PC-9 (cell line): ENCODE measurements at regions of chr17 and their contacts with region 1.

Region 1: DNA sequence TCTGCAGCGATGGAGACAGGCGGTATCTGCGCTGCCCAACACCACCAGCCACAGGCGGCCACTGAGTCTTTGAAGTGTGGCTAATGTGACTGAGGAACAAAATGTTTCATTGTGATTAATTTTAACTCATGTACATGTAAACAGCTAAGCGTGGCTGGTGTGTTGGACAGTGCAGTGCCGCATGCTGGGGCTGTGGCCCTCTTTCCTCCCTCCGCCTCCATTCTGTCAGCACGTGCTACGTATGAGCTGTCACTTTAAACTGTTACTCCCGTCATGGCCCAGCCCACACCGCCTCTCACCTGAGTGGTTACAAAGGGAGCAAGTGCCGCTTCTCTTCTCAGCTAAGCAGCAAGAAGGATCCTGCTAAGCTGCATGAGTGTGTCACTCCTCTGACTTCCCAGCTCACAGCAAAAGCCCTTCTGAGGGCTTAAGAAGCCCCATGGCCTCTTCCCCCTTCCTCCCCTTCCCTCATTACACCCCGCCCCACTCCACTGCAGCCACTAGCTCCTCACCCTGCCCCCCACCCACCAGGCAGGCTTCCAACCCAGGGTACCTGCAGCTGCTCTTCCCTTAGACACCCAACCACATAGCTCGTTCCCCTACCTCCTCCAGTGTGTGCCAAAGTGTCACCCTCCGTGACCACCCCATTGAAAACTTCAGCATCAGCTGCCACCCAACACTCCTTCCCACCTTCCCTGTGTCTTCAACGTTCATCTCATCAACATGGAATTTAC is 15.0 kb downstream of the HASPIN start:
- DNase-seq: peak in 1 of 2 experiments; percentile 45
- H3K4me3 ChIP-seq: no peak overlapping the region
- H3K27ac ChIP-seq: no peak overlapping the region
- H3K4me1 ChIP-seq: no peaks in the 10 kb centered on the region
- H3K27me3 ChIP-seq: no peaks in the 10 kb centered on the region
- CTCF ChIP-seq: no peak

Region 2: DNA sequence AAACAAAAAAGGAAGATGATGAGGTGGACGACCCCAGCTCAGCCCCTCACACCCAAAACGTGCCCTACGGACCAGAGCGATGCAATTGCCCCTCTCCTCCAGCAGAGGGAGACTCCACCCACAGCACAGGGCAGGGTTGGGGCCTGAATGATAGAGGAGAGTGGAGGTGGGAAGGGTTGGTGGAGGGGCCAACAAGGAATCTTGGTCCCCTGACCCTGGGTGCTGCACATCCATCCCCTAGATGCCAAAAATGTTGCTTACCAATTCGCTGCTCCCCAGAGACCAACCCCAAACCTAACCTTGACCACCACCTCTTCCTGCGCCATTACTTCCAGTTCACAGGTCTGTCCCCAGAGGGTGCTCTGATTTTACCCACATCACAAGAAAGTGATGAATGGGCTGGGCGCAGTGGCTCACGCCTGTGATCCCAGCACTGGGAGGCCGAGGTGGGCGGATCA is 55.6 kb before region 1 on chr17:
- CTCF ChIA-PET with region 1: interaction called, 3 read pairs
- POLR2A ChIA-PET with region 1: no interaction called
- intact Hi-C with region 1: loop called (anchors 5 kb)
- DNase-seq: no peak
- H3K4me3 ChIP-seq: no peak overlapping the region
- H3K27ac ChIP-seq: no peak overlapping the region
- H3K4me1 ChIP-seq: no peaks in the 10 kb centered on the region
- H3K27me3 ChIP-seq: no peaks in the 10 kb centered on the region
- CTCF ChIP-seq: peak; percentile 94

Region 3: DNA sequence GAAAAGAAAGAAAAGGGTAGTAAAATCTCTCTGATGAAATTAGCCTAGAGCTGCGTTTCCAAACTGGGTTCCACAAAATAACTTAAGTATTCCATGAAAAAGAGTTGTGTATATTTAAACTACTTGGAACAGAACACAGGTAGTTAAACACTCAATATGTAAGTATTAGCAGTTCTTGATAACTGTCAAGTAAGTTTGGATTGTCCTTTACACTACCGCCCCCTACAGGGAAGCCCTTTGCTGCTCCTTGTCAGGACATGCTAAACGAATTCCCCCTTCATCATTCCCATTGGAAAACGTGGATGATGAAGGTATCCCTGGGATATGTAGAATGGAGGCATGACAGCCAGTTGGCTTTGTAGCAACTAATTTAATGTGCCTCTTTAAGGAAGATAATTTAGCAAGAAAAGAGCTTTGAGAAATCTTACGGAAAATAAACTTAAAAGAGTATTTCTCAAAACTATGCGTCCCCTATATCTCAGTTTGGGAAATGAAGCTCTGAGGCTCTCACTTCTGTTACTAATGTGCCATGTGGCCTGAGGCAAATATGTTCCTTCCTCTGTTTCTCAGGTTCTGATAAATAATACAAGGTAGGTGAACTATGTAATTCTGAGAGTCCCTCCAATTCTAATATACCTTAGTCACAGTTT is 88.5 kb after region 1 on chr17:
- CTCF ChIA-PET with region 1: interaction called, 3 read pairs
- POLR2A ChIA-PET with region 1: no interaction called
- intact Hi-C with region 1: loop called (anchors 1 kb)
- DNase-seq: peak; percentile 44 to 52
- H3K4me3 ChIP-seq: no peak overlapping the region
- H3K27ac ChIP-seq: no peak overlapping the region
- H3K4me1 ChIP-seq: no peaks in the 10 kb centered on the region
- H3K27me3 ChIP-seq: no peaks in the 10 kb centered on the region
- CTCF ChIP-seq: peak; percentile 84

Region 4: GRCh38 chr17:3879186-3879585 is 140.5 kb after region 1 on chr17:
- CTCF ChIA-PET with region 1: no interaction called
- POLR2A ChIA-PET with region 1: no interaction called
- intact Hi-C with region 1: no loop called
- DNase-seq: no peak
- H3K4me3 ChIP-seq: no peak overlapping the region
- H3K27ac ChIP-seq: no peak overlapping the region
- H3K4me1 ChIP-seq: no peaks in the 10 kb centered on the region
- H3K27me3 ChIP-seq: no peaks in the 10 kb centered on the region
- CTCF ChIP-seq: no peak

Region 5: GRCh38 chr17:3907483-3908216 is 168.9 kb after region 1 on chr17:
- CTCF ChIA-PET with region 1: interaction called, 6 read pairs
- POLR2A ChIA-PET with region 1: no interaction called
- intact Hi-C with region 1: loop called (anchors 5 kb)
- DNase-seq: no peak
- H3K4me3 ChIP-seq: no peak overlapping the region
- H3K27ac ChIP-seq: no peak overlapping the region
- H3K4me1 ChIP-seq: no peaks in the 10 kb centered on the region
- H3K27me3 ChIP-seq: no peaks in the 10 kb centered on the region; the same call in 1 of the 2 replicates
- CTCF ChIP-seq: peak; percentile 58

Region 6: GRCh38 chr17:4074831-4075495 is 336.2 kb after region 1 on chr17:
- CTCF ChIA-PET with region 1: interaction called, 3 read pairs
- POLR2A ChIA-PET with region 1: no interaction called
- intact Hi-C with region 1: loop called (anchors 10 kb)
- DNase-seq: peak; percentile 16 to 50
- H3K4me3 ChIP-seq: no peak overlapping the region
- H3K27ac ChIP-seq: no peak overlapping the region
- H3K4me1 ChIP-seq: peaks cover 13% of the 10 kb centered on the region
- H3K27me3 ChIP-seq: no peaks in the 10 kb centered on the region
- CTCF ChIP-seq: peak; percentile 85

Region 7: GRCh38 chr17:4665027-4665426 is 926.3 kb after region 1 on chr17:
- CTCF ChIA-PET with region 1: no interaction called
- POLR2A ChIA-PET with region 1: interaction called, 10 read pairs
- intact Hi-C with region 1: no loop called
- DNase-seq: no peak
- H3K4me3 ChIP-seq: no peak overlapping the region
- H3K27ac ChIP-seq: no peak overlapping the region
- H3K4me1 ChIP-seq: no peaks in the 10 kb centered on the region
- H3K27me3 ChIP-seq: peaks cover 22% of the 10 kb centered on the region; the same call in 1 of the 2 replicates
- CTCF ChIP-seq: no peak